ENCODE measurements at regions of chr6 and their contacts with region 1.

Region 1: GRCh38 chr6:83859410-83860358 is at the start of gene CYB5R4:
- DNase-seq: peak; percentile 99
- H3K4me3 Mint-ChIP-seq: peak within 1 kb of the TSS; percentile 98
- H3K27ac Mint-ChIP-seq: peak within 1 kb of the TSS; percentile 88
- H3K4me1 Mint-ChIP-seq: peaks cover 21% of the 10 kb centered on the region
- H3K27me3 Mint-ChIP-seq: peaks cover 13% of the 10 kb centered on the region
- total RNA-seq, gene CYB5R4: 24.7 and 27.0 TPM in 2 replicates

Region 2: GRCh38 chr6:84027340-84028181 is 167.9 kb after region 1 on chr6:
- intact Hi-C with region 1: no loop called
- DNase-seq: no peak
- H3K4me3 Mint-ChIP-seq: no peak overlapping the region
- H3K27ac Mint-ChIP-seq: no peak overlapping the region
- H3K4me1 Mint-ChIP-seq: no peaks in the 10 kb centered on the region
- H3K27me3 Mint-ChIP-seq: peaks cover 9% of the 10 kb centered on the region

Region 3: GRCh38 chr6:84227434-84228197 is 367.9 kb after region 1 on chr6 and contains the start of gene CEP162:
- intact Hi-C with region 1: loop called (anchors 1 kb)
- DNase-seq: peak; percentile 97
- H3K4me3 Mint-ChIP-seq: peak within 1 kb of the TSS; percentile 98
- H3K27ac Mint-ChIP-seq: peak within 1 kb of the TSS; percentile 89
- H3K4me1 Mint-ChIP-seq: peaks cover 17% of the 10 kb centered on the region
- H3K27me3 Mint-ChIP-seq: peaks cover 13% of the 10 kb centered on the region
- total RNA-seq, gene CEP162: 3.5 and 4.0 TPM in 2 replicates

Region 4: DNA sequence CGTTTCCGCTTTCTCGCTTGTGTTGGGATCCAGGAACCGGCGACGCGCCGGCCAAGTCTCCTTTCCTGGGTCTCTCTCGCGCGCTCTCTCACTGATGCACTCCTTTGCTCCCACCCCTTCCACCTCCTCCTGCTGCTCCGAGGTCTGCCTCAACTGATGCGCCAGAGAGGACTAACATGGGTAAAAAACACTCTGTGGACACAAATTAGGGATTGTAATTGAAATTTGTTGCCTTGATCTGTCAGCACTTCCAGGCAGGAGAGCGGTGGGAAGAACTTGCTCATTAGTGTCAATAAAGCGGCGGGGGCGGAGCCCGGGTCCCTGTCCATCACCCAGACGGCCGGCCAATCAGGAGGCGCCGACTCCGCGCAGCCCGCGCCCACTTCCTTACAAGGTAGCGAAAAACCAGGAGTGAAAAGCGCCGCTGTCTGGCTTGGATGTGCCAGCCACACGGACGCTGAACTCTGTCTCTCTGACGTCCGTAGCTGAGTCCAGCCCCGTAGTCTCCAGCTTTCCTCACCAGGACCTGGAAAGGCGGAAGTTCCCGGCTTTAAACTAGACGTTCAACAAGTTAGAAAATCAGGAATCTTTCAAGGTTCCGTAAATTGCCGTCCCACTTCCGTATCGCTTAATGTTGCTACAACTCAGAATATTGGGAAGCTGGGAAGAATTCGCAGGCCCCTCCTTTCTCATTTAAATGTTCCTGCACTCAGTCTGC is 904.8 kb after region 1 on chr6 and contains the start of gene TBX18:
- intact Hi-C with region 1: loop called (anchors 10 kb)
- DNase-seq: peak; percentile 65
- H3K4me3 Mint-ChIP-seq: peak within 1 kb of the TSS; percentile 63
- H3K27ac Mint-ChIP-seq: peak within 1 kb of the TSS; percentile 82
- H3K4me1 Mint-ChIP-seq: peaks cover 5% of the 10 kb centered on the region
- H3K27me3 Mint-ChIP-seq: peaks cover 68% of the 10 kb centered on the region
- total RNA-seq, gene TBX18: not detected in 2 replicates

Measured in activated CD4-positive, alpha-beta T cell treated with anti-CD3 and anti-CD28 coated beads, Interleukin-2, amount 10 ng/mL, durations not matched to agents 24 days and 14 days (primary cell).